ENCODE measurements at regions of chr16 and their contacts with region 1.

Region 1: GRCh38 chr16:4288148-4288921 is 15.5 kb upstream of the TFAP4 start:
- DNase-seq: peak; percentile 95
- ATAC-seq: peak; percentile 92
- H3K4me3 Mint-ChIP-seq: no peak overlapping the region
- H3K27ac Mint-ChIP-seq: peak overlapping the region; percentile 76
- H3K4me1 Mint-ChIP-seq: peaks cover 35% of the 10 kb centered on the region
- H3K27me3 Mint-ChIP-seq: no peaks in the 10 kb centered on the region; the same call in 1 of the 2 replicates
- CTCF ChIP-seq: peak; percentile 95

Region 2: GRCh38 chr16:4212934-4213296 is 75.4 kb before region 1 on chr16:
- CTCF ChIA-PET with region 1: no interaction called
- POLR2A ChIA-PET with region 1: no interaction called
- DNase-seq: no peak
- ATAC-seq: no peak
- H3K4me3 Mint-ChIP-seq: no peak overlapping the region
- H3K27ac Mint-ChIP-seq: 0 out of 2 replicates have a peak overlapping the region, but pooled peaks have one; percentile 53
- H3K4me1 Mint-ChIP-seq: peaks cover 21% of the 10 kb centered on the region
- H3K27me3 Mint-ChIP-seq: no peaks in the 10 kb centered on the region; the same call in 1 of the 2 replicates
- CTCF ChIP-seq: no peak

Region 3: GRCh38 chr16:4244254-4245076 is 43.9 kb before region 1 on chr16:
- CTCF ChIA-PET with region 1: no interaction called
- POLR2A ChIA-PET with region 1: no interaction called
- DNase-seq: no peak
- ATAC-seq: peak; percentile 51
- H3K4me3 Mint-ChIP-seq: no peak overlapping the region
- H3K27ac Mint-ChIP-seq: no peak overlapping the region
- H3K4me1 Mint-ChIP-seq: peaks cover 27% of the 10 kb centered on the region
- H3K27me3 Mint-ChIP-seq: no peaks in the 10 kb centered on the region; the same call in 1 of the 2 replicates
- CTCF ChIP-seq: no peak

Region 4: DNA sequence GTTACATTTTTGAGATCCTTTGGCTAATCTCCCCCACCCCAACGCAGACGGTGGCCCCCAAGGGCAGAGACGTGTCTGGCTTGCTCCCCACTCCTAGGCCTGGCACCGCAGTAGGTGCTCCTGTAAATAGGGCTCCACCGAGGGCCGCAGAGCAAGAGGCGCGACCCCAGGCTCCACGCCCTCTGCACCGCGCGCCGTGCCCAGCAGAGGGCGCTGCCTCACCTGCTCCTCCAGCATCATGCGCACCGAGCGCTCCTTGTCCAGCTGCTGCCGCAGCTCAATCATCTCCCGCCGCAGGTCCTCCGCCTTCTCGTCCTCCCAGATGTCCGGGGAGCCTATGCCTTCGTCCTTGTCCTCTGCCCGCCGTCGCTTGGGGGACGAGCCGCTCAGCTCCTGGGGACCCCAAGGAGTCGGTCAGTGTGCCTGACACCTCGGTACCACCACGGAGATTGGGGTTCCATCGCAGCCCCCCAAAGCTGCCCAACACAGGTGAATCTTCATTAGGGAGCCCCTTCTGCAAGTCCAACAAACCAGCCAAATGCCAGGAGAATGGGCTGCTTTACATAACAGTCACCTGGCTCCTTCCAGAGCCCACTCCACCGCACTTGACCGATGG is 26.7 kb before region 1 on chr16:
- CTCF ChIA-PET with region 1: interaction called, 15 read pairs
- POLR2A ChIA-PET with region 1: no interaction called
- DNase-seq: peak; percentile 90
- ATAC-seq: peak; percentile 64
- H3K4me3 Mint-ChIP-seq: no peak overlapping the region
- H3K27ac Mint-ChIP-seq: peak overlapping the region; percentile 93
- H3K4me1 Mint-ChIP-seq: peaks cover 29% of the 10 kb centered on the region
- H3K27me3 Mint-ChIP-seq: no peaks in the 10 kb centered on the region
- CTCF ChIP-seq: peak; percentile 99

Region 5: DNA sequence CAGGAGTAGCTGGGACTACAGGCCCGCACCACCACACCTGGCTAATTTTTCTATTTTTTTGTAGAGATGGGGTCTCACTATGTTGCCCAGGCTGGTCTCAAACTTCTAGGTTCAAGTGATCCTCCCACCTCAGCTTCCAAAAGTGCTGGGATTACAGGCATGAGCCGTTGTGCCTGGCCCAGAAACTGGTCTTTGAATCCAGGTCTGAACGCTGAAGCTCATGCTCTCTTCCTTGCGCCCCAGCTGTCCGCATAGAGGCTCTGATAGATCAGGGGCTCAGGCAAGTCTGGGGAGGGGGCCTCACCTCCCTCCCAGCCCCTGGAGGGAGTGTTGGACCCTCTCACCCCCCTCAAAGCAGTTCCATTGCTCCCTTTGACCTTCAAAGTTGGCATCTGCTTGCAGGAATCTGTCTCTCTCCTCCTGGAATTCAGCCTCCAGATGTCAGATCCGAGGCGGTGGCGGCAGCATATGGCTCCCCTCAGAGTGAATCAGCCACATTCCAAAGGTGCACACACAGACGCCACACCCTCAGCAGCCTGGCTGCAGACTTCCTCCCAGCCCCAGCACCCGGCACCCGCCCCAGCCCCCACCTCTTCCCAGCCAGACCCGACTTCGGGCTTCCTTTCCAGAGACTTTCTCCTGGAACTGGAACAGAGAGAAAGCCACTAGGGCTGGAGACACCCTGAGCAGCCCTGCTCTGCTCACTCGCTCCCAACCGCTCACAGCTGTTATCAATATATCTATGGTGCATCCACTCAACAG is 10.6 kb after region 1 on chr16:
- CTCF ChIA-PET with region 1: interaction called, 29 read pairs
- POLR2A ChIA-PET with region 1: interaction called, 5 read pairs
- DNase-seq: peak; percentile 76
- ATAC-seq: peak; percentile 87
- H3K4me3 Mint-ChIP-seq: no peak overlapping the region
- H3K27ac Mint-ChIP-seq: peak overlapping the region; percentile 98
- H3K4me1 Mint-ChIP-seq: peaks cover 27% of the 10 kb centered on the region
- H3K27me3 Mint-ChIP-seq: no peaks in the 10 kb centered on the region
- CTCF ChIP-seq: no peak

Region 6: DNA sequence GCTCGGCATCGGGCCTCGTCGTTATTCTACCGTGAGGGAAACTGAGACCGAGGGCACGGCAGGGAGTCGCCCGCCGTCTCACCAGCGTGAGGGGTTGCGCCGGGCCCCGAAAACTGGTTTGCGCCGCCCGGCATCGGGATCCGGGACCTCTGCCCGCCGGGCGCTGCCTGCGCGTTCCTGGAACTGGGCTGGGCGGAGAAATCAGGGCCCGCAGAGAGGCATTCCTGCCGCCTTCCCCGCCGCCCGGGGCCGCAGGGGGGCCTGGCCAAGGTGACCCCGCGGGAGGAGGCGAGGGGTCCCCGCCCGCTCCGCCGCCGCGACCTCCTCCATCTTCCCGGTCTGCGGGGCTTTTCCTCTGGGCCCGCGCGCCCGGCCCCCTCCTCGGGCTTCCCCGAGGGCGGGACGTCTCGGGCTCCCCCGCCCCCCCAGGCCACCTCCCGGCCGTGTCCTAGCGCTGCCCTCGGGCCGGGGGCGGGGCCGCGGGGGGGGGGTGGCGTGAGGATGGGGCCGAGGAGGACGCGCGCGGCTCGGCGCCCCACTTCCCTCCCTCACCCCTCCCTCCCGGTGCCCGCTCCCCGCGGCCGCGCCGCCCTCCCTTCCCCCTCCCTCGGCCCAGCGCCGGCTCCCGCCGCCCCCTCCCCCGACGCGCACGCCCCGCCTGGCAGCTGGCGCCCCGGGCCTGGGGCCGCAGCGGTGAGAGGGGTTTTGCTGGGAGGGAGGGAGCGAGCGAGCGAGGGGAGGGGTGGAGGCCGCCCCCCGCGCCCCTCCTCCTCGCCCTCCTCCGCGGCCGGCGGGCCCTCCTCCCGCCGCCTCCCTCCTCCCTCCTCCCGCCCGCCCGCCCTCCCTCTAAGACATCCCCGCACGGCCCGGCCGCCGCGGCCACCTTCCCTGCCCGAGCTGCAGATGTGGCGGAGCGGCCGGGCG is 27.1 kb after region 1 on chr16 and contains the start of gene GLIS2:
- CTCF ChIA-PET with region 1: interaction called, 57 read pairs
- POLR2A ChIA-PET with region 1: interaction called, 4 read pairs
- DNase-seq: peak; percentile 82
- ATAC-seq: peak; percentile 44
- H3K4me3 Mint-ChIP-seq: peak within 1 kb of the TSS; percentile 88
- H3K27ac Mint-ChIP-seq: no peak within 1 kb of the TSS
- H3K4me1 Mint-ChIP-seq: peaks cover 30% of the 10 kb centered on the region
- H3K27me3 Mint-ChIP-seq: peaks cover 13% of the 10 kb centered on the region
- CTCF ChIP-seq: no peak
- total RNA-seq, gene GLIS2: 19.5 to 23.0 TPM (median 20.1 TPM) in 3 replicates

Region 7: GRCh38 chr16:4330277-4330874 is 42.0 kb after region 1 on chr16:
- CTCF ChIA-PET with region 1: interaction called, 185 read pairs
- POLR2A ChIA-PET with region 1: interaction called, 3 read pairs
- DNase-seq: peak; percentile 86
- ATAC-seq: peak; percentile 27
- H3K4me3 Mint-ChIP-seq: no peak overlapping the region
- H3K27ac Mint-ChIP-seq: no peak overlapping the region
- H3K4me1 Mint-ChIP-seq: peaks cover 18% of the 10 kb centered on the region
- H3K27me3 Mint-ChIP-seq: no peaks in the 10 kb centered on the region
- CTCF ChIP-seq: peak; percentile 93

Region 8: GRCh38 chr16:4392382-4393239 is 104.3 kb after region 1 on chr16:
- CTCF ChIA-PET with region 1: interaction called, 11 read pairs
- POLR2A ChIA-PET with region 1: no interaction called
- DNase-seq: peak; percentile 81
- ATAC-seq: peak; percentile 76
- H3K4me3 Mint-ChIP-seq: peak overlapping the region; percentile 20; the same call in 1 of the 2 replicates
- H3K27ac Mint-ChIP-seq: peak overlapping the region; percentile 92
- H3K4me1 Mint-ChIP-seq: peaks cover 48% of the 10 kb centered on the region
- H3K27me3 Mint-ChIP-seq: no peaks in the 10 kb centered on the region
- CTCF ChIP-seq: no peak

Measured in WTC11 (cell line).